AG04449 (cell line): ENCODE measurements at regions of chr17 and their contacts with region 1.

Region 1: DNA sequence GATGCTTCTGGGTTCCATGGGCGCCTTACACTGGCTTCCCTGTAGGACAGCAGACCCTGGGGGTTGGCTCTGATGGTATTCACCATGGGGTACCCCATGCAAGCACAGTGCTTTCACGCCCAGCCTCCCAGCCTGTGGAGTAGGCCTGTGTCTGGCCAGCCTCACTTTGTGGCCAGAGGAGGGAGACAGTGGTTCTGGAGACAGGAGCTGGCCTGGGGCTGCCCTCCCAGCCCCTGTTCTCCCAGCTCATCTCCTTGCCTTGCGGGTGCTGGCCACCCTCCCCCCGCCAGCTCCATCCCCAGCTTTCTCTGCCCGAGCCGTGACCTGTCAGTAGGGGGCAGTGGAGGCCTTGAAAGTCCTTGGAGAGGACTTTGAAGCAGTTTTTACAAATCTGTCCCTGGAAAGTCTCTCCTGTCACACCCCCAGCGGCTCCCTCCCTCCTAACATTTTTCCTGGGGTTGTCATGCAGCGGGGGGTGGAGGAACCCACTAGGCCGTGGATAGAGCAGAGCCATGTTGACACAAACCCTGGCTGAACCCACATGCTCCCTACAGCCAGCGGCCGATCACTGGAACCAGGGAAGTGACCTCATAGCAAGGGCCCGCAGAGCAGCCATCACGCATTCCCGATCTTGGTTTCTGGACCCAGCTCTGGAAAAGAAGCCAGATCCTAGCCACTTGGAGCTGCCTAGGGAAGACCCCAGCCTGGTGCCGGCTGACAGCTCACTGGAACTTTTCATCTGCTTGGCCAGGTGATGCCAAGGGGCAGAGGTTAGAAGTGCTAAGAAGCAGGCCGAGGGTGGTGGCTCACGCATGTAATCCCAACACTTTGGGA is 289.4 kb downstream of the SEC14L1 start:
- DNase-seq: peak; percentile 97
- H3K4me3 ChIP-seq: no peak overlapping the region
- CTCF ChIP-seq: peak; percentile 77

Region 2: DNA sequence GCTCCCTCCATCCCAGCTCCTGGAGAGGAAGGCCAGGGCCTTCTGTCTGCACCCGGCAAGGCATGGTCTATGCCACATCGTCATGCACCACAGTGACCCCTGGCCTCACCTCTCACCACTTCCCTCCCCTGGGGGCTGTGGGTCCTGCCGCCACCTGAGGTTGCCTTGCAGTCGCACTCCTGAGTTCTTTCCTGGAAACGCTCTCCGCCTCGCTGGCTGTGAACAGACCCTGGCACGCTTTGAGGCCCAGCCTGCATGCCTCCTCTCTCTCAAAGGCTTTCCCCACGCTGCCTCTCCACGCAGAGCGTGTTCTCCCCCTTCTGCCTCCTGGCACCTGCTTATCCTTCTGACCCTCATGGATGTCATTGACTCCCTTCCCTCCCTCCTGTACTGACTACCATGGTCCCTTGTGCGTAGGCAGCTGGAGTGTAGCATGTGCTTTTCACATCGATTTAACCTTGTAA is 244.0 kb before region 1 on chr17:
- CTCF ChIA-PET with region 1: no interaction called
- POLR2A ChIA-PET with region 1: no interaction called
- DNase-seq: no peak
- H3K4me3 ChIP-seq: no peak overlapping the region
- CTCF ChIP-seq: no peak

Region 3: GRCh38 chr17:77233635-77234334 is 196.4 kb before region 1 on chr17:
- CTCF ChIA-PET with region 1: no interaction called
- POLR2A ChIA-PET with region 1: no interaction called
- DNase-seq: no peak
- H3K4me3 ChIP-seq: no peak overlapping the region
- CTCF ChIP-seq: no peak

Region 4: GRCh38 chr17:77308861-77309726 is 121.0 kb before region 1 on chr17:
- CTCF ChIA-PET with region 1: no interaction called
- POLR2A ChIA-PET with region 1: no interaction called
- DNase-seq: no peak
- H3K4me3 ChIP-seq: no peak overlapping the region
- CTCF ChIP-seq: no peak

Region 5: GRCh38 chr17:77404812-77405581 is 25.1 kb before region 1 on chr17:
- CTCF ChIA-PET with region 1: interaction called, 42 read pairs
- POLR2A ChIA-PET with region 1: no interaction called
- DNase-seq: peak; percentile 33
- H3K4me3 ChIP-seq: no peak overlapping the region
- CTCF ChIP-seq: no peak

Region 6: DNA sequence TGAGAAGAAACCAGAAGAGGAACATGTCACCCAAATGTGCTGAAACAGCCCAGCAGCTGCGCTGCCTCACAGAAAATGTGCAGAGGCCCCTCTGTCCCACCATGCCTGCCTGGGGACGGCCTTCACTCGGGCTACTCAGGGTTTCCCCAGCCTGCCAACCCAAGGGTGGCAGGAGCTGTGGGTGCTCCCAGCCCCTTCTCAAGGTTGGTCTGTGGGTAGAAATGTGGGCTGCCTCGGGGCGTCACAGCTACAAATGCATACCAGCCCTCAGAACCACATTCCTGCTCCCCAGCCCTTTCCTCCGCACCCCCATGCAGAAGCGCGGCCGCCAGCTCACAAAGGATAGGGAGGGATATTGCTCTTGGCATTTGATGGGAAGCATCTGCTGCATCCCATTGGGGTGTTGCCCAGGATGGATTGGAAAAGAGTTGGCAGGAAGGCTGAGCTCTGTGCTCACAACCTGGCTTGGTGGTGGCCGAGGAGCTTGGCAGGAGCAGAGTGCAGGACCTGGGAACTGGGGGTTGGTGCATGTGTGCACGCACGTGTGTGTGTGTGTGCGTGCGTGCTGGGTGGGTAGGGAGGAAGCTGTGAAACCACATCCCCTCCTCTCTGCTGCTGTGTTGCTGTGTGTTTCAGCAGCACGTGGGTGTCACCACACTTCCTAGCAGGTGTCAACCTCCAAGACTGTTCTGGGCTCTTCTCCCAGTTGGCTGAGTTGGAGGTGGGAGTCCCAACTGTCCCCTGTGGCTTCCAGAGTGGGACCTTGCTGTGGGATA is 15.0 kb after region 1 on chr17:
- CTCF ChIA-PET with region 1: interaction called, 69 read pairs
- POLR2A ChIA-PET with region 1: interaction called, 3 read pairs
- DNase-seq: no peak
- H3K4me3 ChIP-seq: no peak overlapping the region
- CTCF ChIP-seq: no peak

Region 7: GRCh38 chr17:77465358-77466041 is 35.4 kb after region 1 on chr17:
- CTCF ChIA-PET with region 1: interaction called, 12 read pairs
- POLR2A ChIA-PET with region 1: interaction called, 4 read pairs
- DNase-seq: no peak
- H3K4me3 ChIP-seq: no peak overlapping the region
- CTCF ChIP-seq: no peak